Left ventricle myocardium superior (tissue), 1 donor: ENCODE measurements at regions of chr4 and their contacts with region 1.

Region 1: GRCh38 chr4:5656422-5656821 is 51.9 kb downstream of the EVC2 start:
- DNase-seq: no peak
- ATAC-seq: no peak

Region 2: GRCh38 chr4:5554376-5554775 is 102.0 kb before region 1 on chr4:
- intact Hi-C with region 1: no loop called
- DNase-seq: no peak
- ATAC-seq: no peak

Region 3: DNA sequence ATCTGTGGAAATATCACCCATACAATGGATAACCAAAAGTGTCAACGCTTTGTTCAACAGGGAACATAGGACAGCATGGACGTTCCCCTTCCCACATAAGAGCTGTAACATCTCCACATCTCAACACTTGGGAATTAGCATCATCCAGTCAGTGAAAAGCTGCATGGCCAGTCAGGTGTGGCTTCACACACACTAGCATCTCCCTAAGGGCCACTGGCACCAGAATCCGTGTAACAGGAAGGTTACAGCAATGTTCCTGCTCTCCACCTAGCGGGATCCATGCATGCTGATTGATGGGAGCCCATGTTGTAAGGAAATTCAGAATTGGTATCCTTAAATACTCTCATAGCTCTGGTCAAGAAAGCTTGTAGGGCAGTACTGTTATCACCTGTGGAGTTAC is 26.9 kb before region 1 on chr4:
- intact Hi-C with region 1: loop called (anchors 2 kb)
- DNase-seq: no peak
- ATAC-seq: no peak

Region 4: DNA sequence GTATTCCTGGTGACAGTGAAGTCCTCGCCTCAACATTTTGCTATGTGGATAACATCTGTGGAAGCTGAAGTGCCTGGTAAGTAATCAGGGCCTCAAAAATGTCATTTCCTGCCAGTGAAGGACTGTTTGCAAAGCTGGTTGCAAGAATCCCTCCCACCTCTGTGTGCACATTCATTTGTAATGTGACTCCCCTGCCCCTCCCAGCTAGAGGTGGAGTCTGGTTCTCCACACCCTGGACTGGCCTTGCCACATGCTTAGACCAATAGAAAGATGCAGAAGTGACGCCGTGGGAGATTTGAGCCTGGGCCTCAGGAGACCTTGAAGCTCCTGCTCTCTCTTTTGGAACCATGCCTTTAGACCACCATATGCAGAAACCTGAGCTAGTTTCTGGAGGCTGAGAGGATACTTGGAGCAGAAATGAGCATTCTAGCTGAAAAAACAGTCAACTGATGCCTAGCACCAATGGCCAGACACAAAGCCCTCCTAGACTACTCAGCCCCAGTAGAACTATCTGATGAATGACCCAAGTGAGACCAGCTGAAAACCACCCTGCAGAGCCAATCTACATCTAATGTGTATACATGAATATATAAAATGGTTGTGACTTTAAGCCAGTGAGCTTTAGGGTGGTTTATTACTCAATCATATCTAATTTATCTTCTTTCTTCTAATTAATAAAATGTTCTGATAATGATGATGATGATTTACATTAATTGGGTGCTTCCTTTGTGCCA is 284.2 kb after region 1 on chr4:
- intact Hi-C with region 1: no loop called
- DNase-seq: no peak
- ATAC-seq: no peak